ENCODE measurements at regions of chr9 and their contacts with region 1.

Region 1: GRCh38 chr9:130235897-130236668 is 29.5 kb upstream of the HMCN2 start:
- DNase-seq: peak; percentile 74 to 75
- H3K4me3 ChIP-seq: no peak overlapping the region
- H3K27ac ChIP-seq: peak overlapping the region; percentile 52 to 66
- H3K4me1 ChIP-seq: peaks cover 0 to 7% of the 10 kb centered on the region in 2 donors
- H3K27me3 ChIP-seq: no peaks in the 10 kb centered on the region
- CTCF ChIP-seq: peak; percentile 93 to 100 (median 98)
- POLR2A ChIP-seq: no peak

Region 2: GRCh38 chr9:129884220-129885017 is 351.7 kb before region 1 on chr9:
- intact Hi-C with region 1: loop called (anchors 10 kb)
- DNase-seq: peak; percentile 84 to 89
- H3K4me3 ChIP-seq: peak overlapping the region; percentile 1 to 21
- H3K27ac ChIP-seq: peak overlapping the region; percentile 82 to 87
- H3K4me1 ChIP-seq: peaks cover 0 to 9% of the 10 kb centered on the region in 2 donors
- H3K27me3 ChIP-seq: no peaks in the 10 kb centered on the region
- CTCF ChIP-seq: no peak
- POLR2A ChIP-seq: peak in 1 of 2 donors; percentile 21

Region 3: GRCh38 chr9:130107234-130107861 is 128.7 kb before region 1 on chr9:
- intact Hi-C with region 1: loop called (anchors 5 kb)
- DNase-seq: peak; percentile 87 to 94
- H3K4me3 ChIP-seq: no peak overlapping the region
- H3K27ac ChIP-seq: peak overlapping the region; percentile 71 to 84
- H3K4me1 ChIP-seq: no peaks in the 10 kb centered on the region
- H3K27me3 ChIP-seq: no peaks in the 10 kb centered on the region
- CTCF ChIP-seq: peak; percentile 85 to 88 (median 87)
- POLR2A ChIP-seq: no peak